Head of caudate nucleus (tissue), 42 donors: ENCODE measurements at regions of chr1 and their contacts with region 1.

Region 1: GRCh38 chr1:88180449-88181108 is 503.5 kb upstream of the PKN2 start:
- DNase-seq: peak; percentile 63 to 94 (median 83)

Region 2: GRCh38 chr1:87942165-87942564 is 238.4 kb before region 1 on chr1:
- intact Hi-C with region 1: no loop called
- DNase-seq: peak in 2 of 42 donors; percentile 4 to 12

Region 3: DNA sequence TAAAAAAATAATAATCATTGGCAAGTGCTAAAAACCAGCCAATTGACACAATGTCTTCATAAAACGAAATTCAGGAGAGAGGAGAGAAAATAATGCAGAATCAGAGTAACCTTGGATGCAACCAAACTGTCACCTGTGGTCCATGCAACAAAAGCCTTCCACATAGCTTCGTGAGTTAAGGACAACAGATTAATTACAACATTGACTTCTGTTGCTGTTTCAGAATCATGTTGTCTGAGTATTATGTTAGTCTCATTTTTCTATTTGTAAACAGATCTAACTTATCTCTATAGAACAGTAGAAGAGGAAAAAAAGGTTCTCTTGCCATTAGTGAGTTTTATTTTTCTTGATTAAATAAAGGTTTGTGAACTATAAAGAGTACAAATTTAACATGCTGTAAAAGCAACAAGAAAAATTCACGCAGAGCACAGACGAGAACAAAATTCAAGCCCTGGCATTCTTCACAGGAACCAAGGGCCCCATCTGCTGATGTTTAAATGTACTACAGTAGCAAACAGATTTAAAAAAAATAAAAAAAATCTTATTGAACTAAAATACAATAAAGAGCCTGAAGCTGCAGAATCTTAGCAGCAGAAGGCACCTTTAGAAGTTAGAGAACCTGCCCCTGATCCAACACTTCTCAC is 122.4 kb after region 1 on chr1:
- intact Hi-C with region 1: loop called (anchors 5 kb)
- DNase-seq: peak in 32 of 42 donors; percentile 2 to 80 (median 42)

Region 4: GRCh38 chr1:88327391-88328267 is 147.1 kb after region 1 on chr1:
- intact Hi-C with region 1: no loop called
- DNase-seq: peak in 10 of 42 donors; percentile 6 to 63 (median 24)

Region 5: DNA sequence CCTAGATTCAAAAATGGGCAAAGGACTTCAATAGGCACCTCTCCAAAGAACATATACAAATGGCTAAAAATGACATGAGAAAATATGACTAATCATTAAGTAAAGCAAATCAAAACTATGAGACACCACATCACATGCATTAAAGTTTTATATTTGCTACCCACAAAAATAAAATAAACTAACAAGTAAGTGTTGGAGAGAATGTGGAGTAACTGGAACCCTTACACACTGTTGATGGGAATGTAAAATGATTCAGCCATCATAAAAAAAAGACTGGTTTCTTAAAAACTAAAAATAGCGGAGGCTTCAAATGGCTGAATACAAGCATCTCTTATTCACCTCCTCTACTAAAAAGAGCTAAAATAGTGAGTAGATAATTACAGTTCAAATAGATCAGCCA is 241.5 kb after region 1 on chr1:
- intact Hi-C with region 1: no loop called
- DNase-seq: no peak